HCT116 (cell line): ENCODE measurements at regions of chr12 and their contacts with region 1.

Region 1: GRCh38 chr12:10749700-10750384 is 26.7 kb upstream of the YBX3 start:
- DNase-seq: peak; percentile 94
- ATAC-seq: peak; percentile 96
- H3K4me3 ChIP-seq: peak overlapping the region; percentile 8 to 36; a peak in 2 of 4 replicates
- H3K27ac ChIP-seq: no peak overlapping the region
- H3K4me1 ChIP-seq: peaks cover 0 to 9% of the 10 kb centered on the region in 2 experiments; a peak in 2 of 4 replicates
- H3K27me3 ChIP-seq: no peaks in the 10 kb centered on the region
- CTCF ChIP-seq: peak; percentile 83 to 98 (median 94)
- POLR2A ChIP-seq: no peak
- RAD21 ChIP-seq: peak; percentile 95

Region 2: DNA sequence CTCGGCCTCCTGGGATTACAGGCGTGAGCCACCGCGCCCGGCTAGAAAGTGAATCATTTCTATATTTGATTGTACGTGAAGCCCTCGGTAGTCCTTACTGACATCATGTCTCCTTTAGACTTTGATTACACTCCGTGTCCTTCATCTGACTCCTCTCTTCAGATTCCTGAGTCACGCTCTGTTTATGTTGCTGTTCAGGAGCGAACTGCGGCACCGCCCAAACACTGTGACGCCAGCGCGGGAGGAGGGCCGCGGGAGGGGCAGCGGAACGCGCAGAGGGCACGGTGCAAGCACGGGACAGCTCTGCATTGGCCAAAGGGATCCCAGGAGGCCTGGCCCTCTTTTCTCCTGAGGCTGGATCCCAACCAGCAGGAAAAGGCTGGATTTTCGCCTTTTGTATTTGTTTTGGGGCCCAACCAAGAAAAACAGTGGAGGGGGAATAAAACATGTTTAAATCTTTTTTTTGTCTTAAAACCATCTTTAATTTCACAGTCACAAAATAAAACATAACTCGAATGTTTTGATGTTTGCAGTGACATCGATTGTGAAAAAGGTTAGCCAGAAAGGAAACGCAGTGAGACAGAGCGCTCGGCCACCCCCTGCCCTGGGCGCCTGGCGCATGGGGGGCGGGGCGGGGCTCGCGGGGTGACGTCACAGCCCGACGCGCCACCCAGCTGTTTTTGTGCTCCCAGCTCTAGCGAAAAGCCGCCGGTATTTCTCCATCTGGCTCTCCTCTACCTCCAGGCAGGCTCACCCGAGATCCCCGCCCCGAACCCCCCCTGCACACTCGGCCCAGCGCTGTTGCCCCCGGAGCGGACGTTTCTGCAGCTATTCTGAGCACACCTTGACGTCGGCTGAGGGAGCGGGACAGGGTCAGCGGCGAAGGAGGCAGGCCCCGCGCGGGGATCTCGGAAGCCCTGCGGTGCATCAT is 537.4 kb before region 1 on chr12 and contains the start of gene GABARAPL1:
- CTCF ChIA-PET with region 1: no interaction called
- POLR2A ChIA-PET with region 1: no interaction called
- RAD21 ChIA-PET with region 1: no interaction called
- intact Hi-C with region 1: loop called (anchors 1 kb)
- DNase-seq: peak; percentile 96
- ATAC-seq: peak; percentile 91
- H3K4me3 ChIP-seq: peak within 1 kb of the TSS; percentile 84 to 89
- H3K27ac ChIP-seq: peak within 1 kb of the TSS; percentile 79
- H3K4me1 ChIP-seq: peaks cover 22 to 44% of the 10 kb centered on the region in 2 experiments; a peak in 3 of 4 replicates
- H3K27me3 ChIP-seq: no peaks in the 10 kb centered on the region
- CTCF ChIP-seq: no peak
- POLR2A ChIP-seq: no peak
- RAD21 ChIP-seq: no peak
- total RNA-seq, gene GABARAPL1: 35.5 TPM

Region 3: DNA sequence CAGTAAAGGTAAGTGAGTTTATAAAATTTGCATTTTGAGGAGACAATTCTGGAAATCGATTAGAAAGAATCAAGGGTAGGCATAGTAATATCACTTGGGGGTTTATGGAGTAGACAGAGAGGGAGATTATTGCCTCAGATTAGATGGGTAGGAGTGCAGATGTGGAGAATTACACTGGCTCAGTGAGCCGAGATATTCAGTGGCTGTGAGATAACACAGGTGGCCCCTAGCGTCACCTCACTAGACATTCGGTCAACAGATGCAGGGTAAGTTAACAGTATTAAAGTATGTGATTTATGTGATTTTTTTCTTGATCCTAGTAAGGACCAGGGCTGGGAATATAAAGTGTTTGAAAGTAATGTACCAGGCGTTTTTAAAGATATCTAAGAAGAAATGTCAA is 481.8 kb before region 1 on chr12:
- CTCF ChIA-PET with region 1: no interaction called
- POLR2A ChIA-PET with region 1: no interaction called
- RAD21 ChIA-PET with region 1: no interaction called
- intact Hi-C with region 1: no loop called
- DNase-seq: no peak
- ATAC-seq: no peak
- H3K4me3 ChIP-seq: no peak overlapping the region
- H3K27ac ChIP-seq: no peak overlapping the region
- H3K4me1 ChIP-seq: no peaks in the 10 kb centered on the region
- H3K27me3 ChIP-seq: no peaks in the 10 kb centered on the region
- CTCF ChIP-seq: no peak
- POLR2A ChIP-seq: no peak
- RAD21 ChIP-seq: no peak

Region 4: GRCh38 chr12:10331642-10332239 is 418.1 kb before region 1 on chr12:
- CTCF ChIA-PET with region 1: no interaction called
- POLR2A ChIA-PET with region 1: no interaction called
- RAD21 ChIA-PET with region 1: no interaction called
- intact Hi-C with region 1: loop called (anchors 5 kb)
- DNase-seq: peak; percentile 56
- ATAC-seq: peak; percentile 98
- H3K4me3 ChIP-seq: no peak overlapping the region
- H3K27ac ChIP-seq: no peak overlapping the region
- H3K4me1 ChIP-seq: peaks cover 0 to 3% of the 10 kb centered on the region in 2 experiments; a peak in 1 of 4 replicates
- H3K27me3 ChIP-seq: no peaks in the 10 kb centered on the region
- CTCF ChIP-seq: peak; percentile 81 to 95 (median 83)
- POLR2A ChIP-seq: no peak
- RAD21 ChIP-seq: peak; percentile 94

Region 5: GRCh38 chr12:10613349-10614055 is 136.3 kb before region 1 on chr12 and contains the start of gene MAGOHB:
- CTCF ChIA-PET with region 1: interaction called, 5 read pairs
- POLR2A ChIA-PET with region 1: no interaction called
- RAD21 ChIA-PET with region 1: no interaction called
- intact Hi-C with region 1: loop called (anchors 5 kb)
- DNase-seq: peak; percentile 90
- ATAC-seq: peak; percentile 95
- H3K4me3 ChIP-seq: peak within 1 kb of the TSS; percentile 71 to 92
- H3K27ac ChIP-seq: peak within 1 kb of the TSS; percentile 42
- H3K4me1 ChIP-seq: peaks cover 0 to 19% of the 10 kb centered on the region in 2 experiments; a peak in 3 of 4 replicates
- H3K27me3 ChIP-seq: no peaks in the 10 kb centered on the region
- CTCF ChIP-seq: no peak
- POLR2A ChIP-seq: peak; percentile 88
- RAD21 ChIP-seq: no peak
- total RNA-seq, gene MAGOHB: 55.8 TPM

Region 6: GRCh38 chr12:10716704-10717315 is 33.0 kb before region 1 on chr12:
- CTCF ChIA-PET with region 1: interaction called, 12 read pairs
- POLR2A ChIA-PET with region 1: interaction called, 3 read pairs
- RAD21 ChIA-PET with region 1: no interaction called
- intact Hi-C with region 1: no loop called
- DNase-seq: peak; percentile 75
- ATAC-seq: peak; percentile 93
- H3K4me3 ChIP-seq: peak overlapping the region; percentile 13 to 41; a peak in 3 of 4 replicates
- H3K27ac ChIP-seq: peak overlapping the region; percentile 68
- H3K4me1 ChIP-seq: peaks cover 54 to 63% of the 10 kb centered on the region in 2 experiments
- H3K27me3 ChIP-seq: no peaks in the 10 kb centered on the region
- CTCF ChIP-seq: no peak
- POLR2A ChIP-seq: no peak
- RAD21 ChIP-seq: no peak